Dendritic cell treated with granulocyte-macrophage colony-stimulating factor and Interleukin-4, amounts not matched to agents 40 ng/mL and 50 ng/mL, for 4 days (primary cell): ENCODE measurements at regions of chr4 and their contacts with region 1.

Region 1: DNA sequence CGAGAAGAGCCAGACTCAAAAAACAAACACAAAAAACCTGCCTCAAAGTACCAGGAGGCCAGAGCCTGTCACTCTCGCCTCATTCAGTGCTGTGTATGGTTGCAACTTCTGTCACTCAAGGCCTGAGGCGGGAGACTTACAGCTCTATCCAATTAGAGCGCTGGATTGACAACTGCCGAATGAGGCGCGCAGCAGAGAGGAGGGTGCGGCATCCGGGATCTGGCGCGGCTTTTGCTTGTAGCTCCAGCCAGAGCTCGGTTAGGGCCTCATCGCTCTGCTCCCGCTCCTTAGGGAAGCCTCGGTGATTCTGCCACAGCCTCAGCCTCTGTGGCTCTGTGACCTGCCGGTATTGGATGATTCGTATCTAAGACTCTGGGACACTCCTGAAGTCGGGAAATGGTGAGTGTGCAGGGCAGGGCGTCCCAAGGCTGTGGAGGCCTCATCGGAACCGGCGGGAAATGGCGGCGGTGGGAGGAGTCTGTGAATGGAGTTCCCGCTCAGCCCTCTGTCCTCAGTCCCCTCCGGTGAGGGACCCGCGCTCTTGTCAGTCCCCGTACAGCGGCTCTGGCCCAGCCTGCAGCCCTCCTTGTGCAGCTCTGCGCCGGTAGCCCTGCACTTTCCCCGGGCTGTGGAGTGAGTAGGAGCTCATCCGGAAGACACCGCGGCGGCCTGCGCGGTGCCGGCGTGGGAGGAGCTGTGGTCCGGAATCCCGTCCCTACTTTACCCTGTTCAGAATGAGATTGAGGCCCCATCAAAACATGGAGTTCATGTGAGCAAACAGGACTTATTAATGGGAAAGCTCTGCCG is at the start of gene ZNF718:
- H3K4me3 Mint-ChIP-seq: peak within 1 kb of the TSS; percentile 98
- H3K27ac Mint-ChIP-seq: peak within 1 kb of the TSS; percentile 95
- H3K4me1 Mint-ChIP-seq: peaks cover 31% of the 10 kb centered on the region
- H3K27me3 Mint-ChIP-seq: no peaks in the 10 kb centered on the region

Region 2: GRCh38 chr4:161496-162284 is 37.2 kb after region 1 on chr4:
- intact Hi-C with region 1: no loop called
- H3K4me3 Mint-ChIP-seq: no peak overlapping the region
- H3K27ac Mint-ChIP-seq: no peak overlapping the region
- H3K4me1 Mint-ChIP-seq: no peaks in the 10 kb centered on the region
- H3K27me3 Mint-ChIP-seq: no peaks in the 10 kb centered on the region

Region 3: DNA sequence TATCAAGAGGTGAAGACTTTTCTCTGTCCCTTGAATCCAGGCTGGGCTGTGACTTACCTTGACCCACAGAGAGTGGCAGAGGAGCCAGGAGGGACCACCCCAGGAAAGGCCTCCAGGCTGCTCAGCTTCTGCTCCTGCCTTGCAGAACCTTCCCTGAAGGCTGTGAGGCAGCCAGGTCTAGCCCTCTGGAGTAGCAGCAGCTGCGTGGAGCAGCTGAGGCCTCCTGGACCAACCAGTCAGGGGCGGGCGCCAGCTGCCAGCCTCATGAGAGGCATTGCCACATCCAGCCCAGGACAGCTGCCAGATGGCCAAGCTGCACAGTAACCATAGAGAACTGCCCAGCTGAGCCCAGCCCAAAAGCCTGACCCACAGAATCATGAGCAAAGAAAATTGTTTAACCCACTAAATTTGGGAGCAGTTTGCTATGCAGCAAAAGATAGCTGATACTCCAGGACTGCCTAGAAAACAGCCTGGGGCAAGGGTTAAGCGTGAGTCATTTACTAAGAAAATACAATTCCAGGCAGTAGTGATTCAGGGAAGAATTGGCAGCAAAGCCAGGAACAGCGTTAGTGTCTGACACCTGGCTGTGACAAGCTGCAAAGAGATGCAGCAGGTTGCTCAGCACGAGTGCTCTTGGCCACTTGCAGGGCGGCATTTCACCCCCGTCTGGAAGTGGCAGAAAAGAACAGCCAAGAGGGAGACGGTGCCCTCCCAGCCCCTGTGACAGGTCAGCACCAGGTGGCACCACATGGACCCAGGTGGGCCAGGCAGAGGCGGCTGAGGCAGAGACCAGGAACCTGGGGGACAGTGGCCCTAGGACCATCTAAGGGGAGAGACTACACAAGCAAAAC is 486.2 kb after region 1 on chr4:
- intact Hi-C with region 1: no loop called
- H3K4me3 Mint-ChIP-seq: no peak overlapping the region
- H3K27ac Mint-ChIP-seq: no peak overlapping the region
- H3K4me1 Mint-ChIP-seq: no peaks in the 10 kb centered on the region
- H3K27me3 Mint-ChIP-seq: peaks cover 8% of the 10 kb centered on the region

Region 4: GRCh38 chr4:674172-675035 is 549.9 kb after region 1 on chr4 and contains the starts of genes ATP5ME and MYL5:
- intact Hi-C with region 1: loop called (anchors 5 kb)
- H3K4me3 Mint-ChIP-seq: peak within 1 kb of the TSS; percentile 82
- H3K27ac Mint-ChIP-seq: peak within 1 kb of the TSS; percentile 91
- H3K4me1 Mint-ChIP-seq: peaks cover 44% of the 10 kb centered on the region
- H3K27me3 Mint-ChIP-seq: no peaks in the 10 kb centered on the region